A549 (cell line): ENCODE measurements at regions of chr11 and their contacts with region 1.

Region 1: GRCh38 chr11:33970984-33971466 is 79.1 kb upstream of the LMO2 start:
- DNase-seq: peak; percentile 55 to 66
- ATAC-seq: peak; percentile 89 to 97
- H3K4me3 ChIP-seq: no peak overlapping the region
- H3K27ac ChIP-seq: no peak overlapping the region
- H3K4me1 ChIP-seq: no peaks in the 10 kb centered on the region
- CTCF ChIP-seq: peak; percentile 76
- EP300 ChIP-seq: no peak
- POLR2A ChIP-seq: no peak
- RAD21 ChIP-seq: peak; percentile 84 to 92

Region 2: GRCh38 chr11:33835143-33835878 is 135.7 kb before region 1 on chr11:
- CTCF ChIA-PET with region 1: interaction called, 36 read pairs
- POLR2A ChIA-PET with region 1: interaction called, 4 read pairs
- DNase-seq: peak; percentile 35 to 69
- ATAC-seq: peak; percentile 70 to 83; a peak in 5 of 6 replicates
- H3K4me3 ChIP-seq: no peak overlapping the region
- H3K27ac ChIP-seq: no peak overlapping the region
- H3K4me1 ChIP-seq: 0 out of 3 replicates have a peak, but pooled peaks cover 4% of the 10 kb centered on the region
- CTCF ChIP-seq: peak; percentile 59; the same call in 2 of the 3 replicates
- EP300 ChIP-seq: no peak
- POLR2A ChIP-seq: no peak
- RAD21 ChIP-seq: peak; percentile 63 to 73

Region 3: DNA sequence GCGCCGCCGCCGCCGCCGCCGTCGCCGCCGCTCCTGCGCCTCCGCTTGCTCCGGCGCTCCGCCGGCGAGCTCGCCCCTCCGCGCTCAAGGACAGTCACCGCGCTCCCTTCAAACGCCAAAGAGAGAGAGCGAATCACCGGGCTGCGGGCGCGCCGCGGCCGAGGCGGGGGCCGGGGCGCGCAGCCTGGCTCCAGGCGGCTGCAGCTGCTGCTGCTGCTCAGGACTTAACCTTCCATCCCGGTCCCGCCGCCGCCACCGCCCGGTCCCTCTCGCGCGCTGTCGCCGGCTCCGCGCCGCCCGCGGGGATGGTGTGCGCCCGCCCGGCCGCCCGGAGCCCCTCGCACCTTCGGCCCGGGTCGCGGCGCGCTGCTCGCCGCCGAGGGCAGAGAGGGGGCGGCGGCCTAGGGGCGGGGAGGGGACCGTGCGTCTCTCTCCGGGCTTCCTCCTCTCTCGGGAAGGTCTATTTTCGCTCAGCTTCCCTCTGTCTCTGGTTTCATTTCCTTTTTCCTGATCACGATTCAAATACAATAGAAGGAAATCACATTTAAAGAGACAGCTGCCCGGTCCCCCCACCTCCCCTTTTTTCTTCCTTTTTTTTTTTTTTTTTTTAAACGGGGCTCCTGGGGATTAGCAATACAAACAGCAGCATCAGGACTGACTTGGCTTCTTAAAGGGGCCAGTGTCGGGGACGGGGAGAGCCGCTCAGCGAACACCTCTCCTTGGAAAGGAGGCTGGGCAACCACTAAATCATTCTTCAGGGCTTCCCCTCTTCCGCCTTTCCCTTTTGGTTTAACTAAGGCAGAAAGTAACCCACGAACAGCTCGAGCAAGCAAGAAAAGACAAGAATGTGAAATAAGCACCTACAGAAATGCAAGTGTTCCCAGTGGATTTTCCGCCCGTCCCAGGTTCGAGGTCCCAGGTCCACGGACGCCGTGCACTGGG is 101.3 kb before region 1 on chr11:
- CTCF ChIA-PET with region 1: interaction called, 28 read pairs
- POLR2A ChIA-PET with region 1: no interaction called
- DNase-seq: peak in 1 of 2 experiments; percentile 14
- ATAC-seq: peak; percentile 60 to 66; a peak in 5 of 6 replicates
- H3K4me3 ChIP-seq: peak overlapping the region; percentile 76
- H3K27ac ChIP-seq: peak overlapping the region; percentile 21 to 78; a peak in 4 of 6 replicates
- H3K4me1 ChIP-seq: 0 out of 3 replicates have a peak, but pooled peaks cover 6% of the 10 kb centered on the region
- CTCF ChIP-seq: no peak
- EP300 ChIP-seq: no peak
- POLR2A ChIP-seq: no peak
- RAD21 ChIP-seq: no peak

Region 4: GRCh38 chr11:33959855-33960400 is 11.1 kb before region 1 on chr11:
- CTCF ChIA-PET with region 1: interaction called, 39 read pairs
- POLR2A ChIA-PET with region 1: no interaction called
- DNase-seq: no peak
- ATAC-seq: no peak
- H3K4me3 ChIP-seq: no peak overlapping the region
- H3K27ac ChIP-seq: no peak overlapping the region
- H3K4me1 ChIP-seq: no peaks in the 10 kb centered on the region
- CTCF ChIP-seq: no peak
- EP300 ChIP-seq: no peak
- POLR2A ChIP-seq: no peak
- RAD21 ChIP-seq: no peak